ENCODE measurements at regions of chr10 and their contacts with region 1.

Region 1: GRCh38 chr10:4849555-4850242 is 23.7 kb downstream of the AKR1E2 start:
- DNase-seq: peak; percentile 88
- ATAC-seq: peak; percentile 94
- H3K4me3 Mint-ChIP-seq: no peak overlapping the region
- H3K27ac Mint-ChIP-seq: no peak overlapping the region
- H3K4me1 Mint-ChIP-seq: peaks cover 6% of the 10 kb centered on the region
- H3K27me3 Mint-ChIP-seq: peaks cover 6% of the 10 kb centered on the region

Region 2: GRCh38 chr10:4474829-4475228 is 374.9 kb before region 1 on chr10:
- CTCF ChIA-PET with region 1: no interaction called
- DNase-seq: peak; percentile 55
- ATAC-seq: no peak
- H3K4me3 Mint-ChIP-seq: no peak overlapping the region
- H3K27ac Mint-ChIP-seq: peak overlapping the region; percentile 28
- H3K4me1 Mint-ChIP-seq: peaks cover 26% of the 10 kb centered on the region
- H3K27me3 Mint-ChIP-seq: peaks cover 4% of the 10 kb centered on the region

Region 3: DNA sequence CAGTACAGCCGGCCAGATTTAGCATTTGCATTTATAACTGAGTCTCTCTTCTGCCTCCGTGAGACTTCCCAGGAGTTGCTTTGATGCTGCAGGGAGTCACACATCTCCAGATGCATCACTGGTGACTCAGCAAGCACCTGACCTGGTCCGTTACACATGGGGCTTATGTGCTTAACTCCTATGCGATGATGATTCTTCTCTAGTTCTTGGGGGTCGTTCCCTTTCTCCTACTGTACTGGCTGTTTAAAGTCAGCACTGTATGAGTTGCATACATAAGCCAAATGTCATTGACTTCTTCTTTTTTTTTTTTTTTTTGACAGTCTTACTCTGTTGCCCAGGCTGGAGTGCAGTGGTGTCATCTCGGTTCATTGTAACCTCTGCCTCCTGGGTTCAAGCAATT is 36.7 kb before region 1 on chr10:
- CTCF ChIA-PET with region 1: interaction called, 23 read pairs
- DNase-seq: no peak
- ATAC-seq: no peak
- H3K4me3 Mint-ChIP-seq: no peak overlapping the region
- H3K27ac Mint-ChIP-seq: no peak overlapping the region
- H3K4me1 Mint-ChIP-seq: no peaks in the 10 kb centered on the region
- H3K27me3 Mint-ChIP-seq: peaks cover 11% of the 10 kb centered on the region

Region 4: GRCh38 chr10:4839401-4839800 is 10.3 kb before region 1 on chr10:
- CTCF ChIA-PET with region 1: interaction called, 76 read pairs
- DNase-seq: no peak
- ATAC-seq: no peak
- H3K4me3 Mint-ChIP-seq: no peak overlapping the region
- H3K27ac Mint-ChIP-seq: no peak overlapping the region
- H3K4me1 Mint-ChIP-seq: peaks cover 15% of the 10 kb centered on the region
- H3K27me3 Mint-ChIP-seq: no peaks in the 10 kb centered on the region

Region 5: DNA sequence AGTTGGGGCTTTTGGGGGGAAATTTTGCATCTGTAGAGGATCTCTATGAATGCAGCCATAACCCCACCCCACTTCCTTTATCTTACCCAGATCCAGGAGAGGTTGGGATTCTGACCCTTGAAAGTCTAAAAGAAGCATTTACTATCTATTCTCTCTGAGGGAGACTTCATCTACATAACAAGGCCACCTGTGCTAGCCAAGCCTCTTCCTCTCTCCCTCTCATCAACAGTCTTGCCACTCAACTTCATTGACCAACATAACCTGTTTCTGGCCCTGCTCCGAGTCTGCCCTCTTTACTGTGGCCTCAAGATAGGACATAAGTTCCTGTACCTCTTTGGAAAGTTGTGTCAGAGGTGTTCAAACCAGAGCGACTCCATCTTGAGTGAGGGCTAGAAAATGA is 535.5 kb after region 1 on chr10:
- CTCF ChIA-PET with region 1: interaction called, 19 read pairs
- DNase-seq: no peak
- ATAC-seq: no peak
- H3K4me3 Mint-ChIP-seq: no peak overlapping the region
- H3K27ac Mint-ChIP-seq: no peak overlapping the region
- H3K4me1 Mint-ChIP-seq: no peaks in the 10 kb centered on the region
- H3K27me3 Mint-ChIP-seq: peaks cover 7% of the 10 kb centered on the region

Region 6: GRCh38 chr10:5623081-5623748 is 773.5 kb after region 1 on chr10:
- CTCF ChIA-PET with region 1: interaction called, 23 read pairs
- DNase-seq: peak; percentile 88
- ATAC-seq: peak; percentile 97
- H3K4me3 Mint-ChIP-seq: no peak overlapping the region
- H3K27ac Mint-ChIP-seq: no peak overlapping the region
- H3K4me1 Mint-ChIP-seq: peaks cover 18% of the 10 kb centered on the region
- H3K27me3 Mint-ChIP-seq: peaks cover 6% of the 10 kb centered on the region